ENCODE measurements at regions of chr2 and their contacts with region 1.

Region 1: GRCh38 chr2:223369889-223370288 is 232.3 kb downstream of the SCG2 start:
- DNase-seq: no peak
- H3K4me3 ChIP-seq: no peak overlapping the region
- H3K4me3 Mint-ChIP-seq: no peak overlapping the region
- H3K27ac ChIP-seq: no peak overlapping the region
- H3K27ac Mint-ChIP-seq: no peak overlapping the region
- H3K4me1 ChIP-seq: no peaks in the 10 kb centered on the region
- H3K4me1 Mint-ChIP-seq: no peaks in the 10 kb centered on the region
- H3K27me3 ChIP-seq: no peaks in the 10 kb centered on the region
- H3K27me3 Mint-ChIP-seq: peaks cover 0 to 4% (median 2%) of the 10 kb centered on the region in 3 donors
- CTCF ChIP-seq: no peak

Region 2: DNA sequence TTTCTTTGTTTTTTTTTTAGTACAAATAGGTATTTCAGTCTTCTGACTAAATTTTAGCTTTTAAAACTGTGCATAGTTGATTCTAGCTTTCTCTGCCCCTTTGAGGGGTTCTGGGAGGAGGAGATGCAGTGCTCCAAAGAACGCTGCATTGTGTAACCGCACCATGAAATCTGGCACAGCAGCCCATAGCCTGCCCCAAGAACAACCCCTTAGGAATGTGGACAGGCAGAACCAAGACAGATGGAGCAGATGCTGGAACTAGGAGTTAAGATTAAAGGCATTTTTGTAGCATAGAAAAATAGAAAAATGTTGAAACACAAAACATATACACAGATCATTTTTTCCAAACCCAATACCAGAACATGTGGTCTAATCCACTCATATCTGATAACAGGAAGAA is 44.8 kb after region 1 on chr2:
- intact Hi-C with region 1: loop called in 1 of 2 experiments (anchors 2 kb)
- DNase-seq: no peak
- H3K4me3 ChIP-seq: no peak overlapping the region
- H3K4me3 Mint-ChIP-seq: no peak overlapping the region
- H3K27ac ChIP-seq: no peak overlapping the region
- H3K27ac Mint-ChIP-seq: no peak overlapping the region
- H3K4me1 ChIP-seq: no peaks in the 10 kb centered on the region
- H3K4me1 Mint-ChIP-seq: no peaks in the 10 kb centered on the region
- H3K27me3 ChIP-seq: no peaks in the 10 kb centered on the region
- H3K27me3 Mint-ChIP-seq: peaks cover 0 to 6% (median 3%) of the 10 kb centered on the region in 3 donors
- CTCF ChIP-seq: no peak

Measured in CD14-positive monocyte (primary cell).